Activated T-helper 2 cell treated with anti-CD3 and anti-CD28 coated beads, Interferon-gamma antibody, Interleukin-2, Interleukin-4, amounts not matched to agents 10 μg/mL and 5 μg/mL and 100 μg/mL, durations not matched to agents 14 hours and 24 hours and 36 hours (primary cell): ENCODE measurements at regions of chr10 and their contacts with region 1.

Region 1: DNA sequence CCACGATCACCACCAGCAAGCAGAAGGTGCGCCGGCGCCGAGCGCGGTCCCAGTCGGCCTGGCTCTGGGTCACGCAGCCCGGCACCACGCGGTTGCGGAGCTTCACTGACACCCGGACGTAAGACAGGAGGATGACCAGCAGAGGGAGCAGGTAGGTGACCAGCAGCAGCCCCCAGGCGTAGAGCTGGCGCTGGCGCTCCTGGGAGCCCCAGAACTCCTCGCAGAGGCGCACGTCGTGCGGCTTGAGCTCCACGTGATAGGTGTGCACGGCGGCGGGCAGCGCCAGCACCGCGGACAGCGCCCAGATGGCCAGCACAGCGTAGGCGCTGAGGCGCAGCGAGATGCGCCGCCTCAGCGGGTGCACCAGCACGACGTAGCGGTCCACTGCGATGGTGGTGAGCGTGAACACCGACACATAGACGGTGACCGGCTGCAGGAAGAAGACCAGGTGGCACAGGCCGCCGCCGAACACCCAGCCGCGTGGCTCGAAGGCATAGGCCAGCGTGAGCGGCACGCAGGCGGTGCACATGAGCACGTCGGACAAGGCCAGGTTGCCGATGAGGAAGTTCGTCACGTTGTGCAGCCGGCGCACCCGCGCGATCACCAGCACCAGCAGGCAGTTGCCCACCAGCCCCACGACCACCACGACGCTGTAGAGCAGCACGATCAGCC is 920 bp downstream of the PRLHR start:
- DNase-seq: peak; percentile 11
- H3K4me3 Mint-ChIP-seq: no peak overlapping the region
- H3K27ac Mint-ChIP-seq: no peak overlapping the region
- H3K4me1 Mint-ChIP-seq: no peaks in the 10 kb centered on the region
- H3K27me3 Mint-ChIP-seq: peaks cover 33% of the 10 kb centered on the region

Region 2: DNA sequence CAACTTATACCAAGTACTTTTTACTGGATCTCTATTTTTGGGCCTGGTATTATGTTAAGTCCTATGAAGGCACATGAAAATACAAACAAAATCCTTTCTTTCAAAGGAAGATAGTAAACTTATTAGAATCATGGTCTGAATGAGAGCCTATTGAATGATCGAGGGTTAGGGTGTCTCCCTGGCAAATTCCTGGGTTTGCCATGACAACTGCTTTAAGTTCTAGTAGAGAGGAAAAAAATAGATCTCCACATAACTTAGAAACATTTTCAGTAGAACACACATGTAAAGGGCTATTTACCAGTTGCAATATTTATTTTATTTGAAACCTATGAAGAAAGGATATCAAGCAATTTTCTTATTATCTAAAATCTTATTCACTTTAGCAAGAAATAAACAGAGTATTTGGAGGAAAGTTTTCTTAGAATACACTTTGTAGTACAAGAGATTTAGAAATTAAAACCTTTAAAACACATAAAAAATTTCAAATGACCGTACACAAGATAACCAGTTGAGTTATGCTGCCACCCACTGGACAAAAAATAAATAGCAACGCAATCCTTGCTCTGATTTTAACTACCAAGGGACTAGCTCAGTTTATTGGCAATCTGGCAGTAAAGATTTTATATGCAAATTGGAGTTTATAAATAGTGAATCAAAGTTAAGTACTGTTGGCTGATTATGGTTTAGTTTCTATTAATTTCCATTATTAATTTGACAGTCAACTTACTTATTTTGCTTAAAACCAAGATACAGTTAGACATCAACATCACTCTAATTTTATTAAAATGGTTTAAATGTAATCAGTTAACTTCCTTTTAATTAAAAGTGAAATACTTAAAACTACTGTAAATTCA is 126.4 kb after region 1 on chr10:
- intact Hi-C with region 1: loop called (anchors 1 kb)
- DNase-seq: peak; percentile 30
- H3K4me3 Mint-ChIP-seq: no peak overlapping the region
- H3K27ac Mint-ChIP-seq: no peak overlapping the region
- H3K4me1 Mint-ChIP-seq: no peaks in the 10 kb centered on the region
- H3K27me3 Mint-ChIP-seq: peaks cover 2% of the 10 kb centered on the region